ENCODE measurements at regions of chr1 and their contacts with region 1.

Region 1: GRCh38 chr1:212455803-212456528 is 23.2 kb downstream of the NENF start:
- DNase-seq: peak; percentile 47
- H3K4me3 ChIP-seq: peak overlapping the region; percentile 20; the same call in 1 of the 2 replicates
- CTCF ChIP-seq: peak; percentile 92

Region 2: DNA sequence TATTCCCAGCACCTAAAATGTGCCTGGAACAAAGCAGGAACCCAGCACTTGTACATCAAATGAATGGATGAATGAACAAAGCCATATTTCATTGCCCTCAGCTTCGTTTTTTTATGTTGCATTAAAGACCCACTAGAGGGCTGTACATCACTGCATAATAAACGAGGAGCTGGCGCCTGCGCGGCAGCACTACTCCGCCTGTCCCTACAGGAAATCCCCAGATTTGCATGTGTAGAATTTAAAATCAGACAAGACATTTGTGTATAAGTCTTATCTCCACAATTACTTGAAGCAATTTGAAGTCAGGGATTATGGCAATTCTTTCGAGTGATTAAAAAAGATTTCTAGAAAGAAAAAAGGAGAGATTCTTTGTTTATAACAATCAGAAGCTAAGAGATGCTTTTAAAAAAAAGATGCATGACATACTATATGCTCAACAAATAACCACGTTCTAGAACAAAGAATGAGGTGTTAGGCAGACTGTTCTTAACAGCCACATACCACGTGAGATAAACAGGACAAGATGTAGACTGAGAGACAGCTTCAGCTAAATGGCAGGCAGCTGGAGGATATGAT is 775.1 kb before region 1 on chr1:
- CTCF ChIA-PET with region 1: interaction called, 79 read pairs
- POLR2A ChIA-PET with region 1: interaction called, 3 read pairs
- DNase-seq: peak; percentile 57
- H3K4me3 ChIP-seq: no peak overlapping the region
- CTCF ChIP-seq: peak; percentile 58

Region 3: GRCh38 chr1:212062832-212063438 is 393.0 kb before region 1 on chr1:
- CTCF ChIA-PET with region 1: interaction called, 257 read pairs
- POLR2A ChIA-PET with region 1: no interaction called
- DNase-seq: no peak
- H3K4me3 ChIP-seq: no peak overlapping the region
- CTCF ChIP-seq: peak; percentile 63

Region 4: DNA sequence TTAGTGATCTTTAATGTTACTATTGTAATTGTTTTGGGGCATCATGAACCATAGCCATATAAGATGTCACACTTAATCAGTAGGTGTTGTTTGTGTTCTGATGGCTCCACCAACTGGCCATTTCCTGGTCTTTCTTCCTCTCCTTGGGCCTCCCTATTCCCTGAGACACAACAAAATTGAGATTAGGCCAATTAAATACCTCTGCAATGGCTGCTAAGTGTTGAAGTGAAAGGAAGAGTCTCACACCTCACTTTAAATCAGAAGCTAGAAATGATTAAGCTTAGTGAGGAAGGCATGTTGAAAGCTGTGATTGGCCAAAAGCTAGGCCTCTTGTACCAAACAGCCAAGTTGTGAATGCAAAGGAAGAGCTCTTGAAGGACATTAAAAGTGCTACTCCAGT is 140.1 kb before region 1 on chr1:
- CTCF ChIA-PET with region 1: interaction called, 11 read pairs
- POLR2A ChIA-PET with region 1: no interaction called
- DNase-seq: no peak
- H3K4me3 ChIP-seq: no peak overlapping the region
- CTCF ChIP-seq: no peak

Region 5: GRCh38 chr1:212440419-212440818 is 15.5 kb before region 1 on chr1:
- CTCF ChIA-PET with region 1: interaction called, 24 read pairs
- POLR2A ChIA-PET with region 1: no interaction called
- DNase-seq: no peak
- H3K4me3 ChIP-seq: no peak overlapping the region
- CTCF ChIP-seq: no peak

Region 6: GRCh38 chr1:212782422-212783154 is 326.6 kb after region 1 on chr1:
- CTCF ChIA-PET with region 1: interaction called, 33 read pairs
- POLR2A ChIA-PET with region 1: no interaction called
- DNase-seq: no peak
- H3K4me3 ChIP-seq: no peak overlapping the region
- CTCF ChIP-seq: peak; percentile 36

Measured in AG04449 (cell line).